ENCODE measurements at regions of chr9 and their contacts with region 1.

Region 1: DNA sequence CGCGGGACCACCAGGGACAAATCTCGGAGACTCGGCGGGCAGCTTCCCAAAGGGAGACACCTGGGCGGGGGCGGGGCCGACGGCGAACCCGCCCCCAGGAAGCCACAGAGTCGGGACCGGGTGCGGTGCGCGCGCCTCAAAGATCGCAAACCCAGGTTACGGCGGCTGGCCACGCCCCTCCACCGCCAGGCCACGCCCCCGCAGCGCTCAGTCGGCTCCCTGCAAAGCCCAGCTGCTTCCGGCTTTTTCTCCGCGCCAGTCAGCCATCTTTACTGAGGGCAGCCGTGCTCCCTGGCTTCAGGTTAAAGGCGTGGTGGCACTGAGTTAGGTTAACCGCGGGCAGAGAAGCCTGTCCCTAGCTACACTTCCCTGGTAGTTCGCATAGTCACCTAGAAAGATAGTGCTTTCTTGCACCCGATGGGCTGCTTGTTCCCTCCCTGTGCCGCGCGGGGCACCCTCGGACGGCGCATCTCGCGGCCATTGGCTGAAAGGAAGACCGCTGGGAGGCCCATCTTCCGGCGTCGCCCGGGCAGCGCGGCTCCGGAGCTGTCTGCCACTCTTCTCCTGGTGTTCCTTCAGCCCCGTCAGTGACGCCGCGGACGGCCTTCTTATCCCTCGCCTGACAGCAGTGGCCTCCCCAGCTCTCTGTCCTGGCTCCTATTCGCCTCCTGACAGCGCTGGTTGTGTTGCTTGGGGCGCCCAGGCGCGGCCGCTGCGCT is at the start of gene TBC1D2:
- DNase-seq: peak; percentile 96 to 99 (median 97)
- ATAC-seq: peak; percentile 92
- H3K4me3 ChIP-seq: peak within 1 kb of the TSS; percentile 90 to 94
- H3K4me3 Mint-ChIP-seq: peak within 1 kb of the TSS; percentile 93
- H3K27ac ChIP-seq: peak within 1 kb of the TSS; percentile 82 to 88
- H3K27ac Mint-ChIP-seq: peak within 1 kb of the TSS; percentile 94
- H3K4me1 ChIP-seq: peaks cover 20% of the 10 kb centered on the region
- H3K4me1 Mint-ChIP-seq: peaks cover 33% of the 10 kb centered on the region
- H3K27me3 ChIP-seq: no peaks in the 10 kb centered on the region
- H3K27me3 Mint-ChIP-seq: no peaks in the 10 kb centered on the region
- CTCF ChIP-seq: peak; percentile 13
- total RNA-seq, gene TBC1D2: 1.9 to 2.6 TPM

Region 2: DNA sequence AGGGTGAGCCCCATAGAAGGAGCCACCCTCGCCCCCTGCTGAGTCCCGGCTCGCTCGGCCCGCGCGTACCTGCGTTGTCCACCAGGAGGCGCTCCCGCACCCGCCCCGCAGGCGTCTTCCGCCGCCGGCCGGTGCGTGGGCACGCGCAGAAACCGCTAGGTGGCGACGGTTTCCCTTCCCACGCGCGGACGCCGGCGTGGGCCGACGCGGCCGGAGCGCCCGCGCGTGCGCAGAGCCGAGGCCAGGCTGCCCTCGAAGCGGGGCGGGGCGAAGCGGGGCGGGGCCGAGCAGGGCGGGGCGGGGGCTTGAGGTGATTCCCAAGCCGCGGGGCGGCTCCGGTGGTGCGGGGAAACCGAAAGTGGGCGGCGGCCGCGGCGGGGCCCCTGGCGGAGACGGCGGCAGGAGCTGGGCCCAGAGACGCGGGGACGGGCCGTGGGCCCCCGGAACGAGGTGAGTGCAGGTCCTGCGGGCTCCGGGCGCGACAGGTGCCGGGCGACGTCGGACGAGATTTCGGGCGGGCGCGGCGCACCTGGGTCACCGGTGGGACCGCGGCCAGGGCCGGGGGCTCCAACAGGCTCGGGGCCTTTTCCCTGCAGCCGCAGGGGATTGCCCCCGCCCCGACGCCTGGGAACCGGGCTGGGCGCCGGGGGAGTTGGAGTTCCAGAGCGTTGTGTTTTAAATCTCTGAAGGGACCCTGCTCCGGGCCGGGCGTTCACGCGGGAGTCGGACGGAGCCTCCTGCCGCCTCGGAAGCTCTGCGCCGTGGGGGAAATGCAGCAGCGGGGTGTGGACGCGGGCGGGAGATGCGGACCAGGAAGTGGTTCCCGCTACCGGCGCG is 843.7 kb before region 1 on chr9 and contains the start of gene TDRD7:
- CTCF ChIA-PET with region 1: interaction called, 6 read pairs
- POLR2A ChIA-PET with region 1: no interaction called
- intact Hi-C with region 1: loop called in 1 of 2 experiments (anchors 5 kb)
- DNase-seq: peak; percentile 86 to 97 (median 92)
- ATAC-seq: peak; percentile 88
- H3K4me3 ChIP-seq: peak within 1 kb of the TSS; percentile 62 to 77
- H3K4me3 Mint-ChIP-seq: peak within 1 kb of the TSS; percentile 86
- H3K27ac ChIP-seq: peak within 1 kb of the TSS; percentile 56 to 79
- H3K27ac Mint-ChIP-seq: peak within 1 kb of the TSS; percentile 85
- H3K4me1 ChIP-seq: peaks cover 13% of the 10 kb centered on the region
- H3K4me1 Mint-ChIP-seq: peaks cover 27% of the 10 kb centered on the region
- H3K27me3 ChIP-seq: no peaks in the 10 kb centered on the region
- H3K27me3 Mint-ChIP-seq: peaks cover 14% of the 10 kb centered on the region
- CTCF ChIP-seq: peak; percentile 96
- total RNA-seq, gene TDRD7: 3.5 to 4.5 TPM

Region 3: GRCh38 chr9:97803167-97804058 is 452.3 kb before region 1 on chr9:
- CTCF ChIA-PET with region 1: no interaction called
- POLR2A ChIA-PET with region 1: no interaction called
- intact Hi-C with region 1: loop called (anchors 1 to 5 kb)
- DNase-seq: peak; percentile 47 to 86 (median 77)
- ATAC-seq: peak; percentile 97
- H3K4me3 ChIP-seq: peak overlapping the region; percentile 43 to 56
- H3K4me3 Mint-ChIP-seq: peak overlapping the region; percentile 81
- H3K27ac ChIP-seq: no peak overlapping the region
- H3K27ac Mint-ChIP-seq: peak overlapping the region; percentile 42
- H3K4me1 ChIP-seq: peaks cover 7% of the 10 kb centered on the region
- H3K4me1 Mint-ChIP-seq: peaks cover 5% of the 10 kb centered on the region
- H3K27me3 ChIP-seq: peaks cover 3 to 5% of the 10 kb centered on the region in 2 experiments
- H3K27me3 Mint-ChIP-seq: peaks cover 13% of the 10 kb centered on the region
- CTCF ChIP-seq: no peak

Region 4: DNA sequence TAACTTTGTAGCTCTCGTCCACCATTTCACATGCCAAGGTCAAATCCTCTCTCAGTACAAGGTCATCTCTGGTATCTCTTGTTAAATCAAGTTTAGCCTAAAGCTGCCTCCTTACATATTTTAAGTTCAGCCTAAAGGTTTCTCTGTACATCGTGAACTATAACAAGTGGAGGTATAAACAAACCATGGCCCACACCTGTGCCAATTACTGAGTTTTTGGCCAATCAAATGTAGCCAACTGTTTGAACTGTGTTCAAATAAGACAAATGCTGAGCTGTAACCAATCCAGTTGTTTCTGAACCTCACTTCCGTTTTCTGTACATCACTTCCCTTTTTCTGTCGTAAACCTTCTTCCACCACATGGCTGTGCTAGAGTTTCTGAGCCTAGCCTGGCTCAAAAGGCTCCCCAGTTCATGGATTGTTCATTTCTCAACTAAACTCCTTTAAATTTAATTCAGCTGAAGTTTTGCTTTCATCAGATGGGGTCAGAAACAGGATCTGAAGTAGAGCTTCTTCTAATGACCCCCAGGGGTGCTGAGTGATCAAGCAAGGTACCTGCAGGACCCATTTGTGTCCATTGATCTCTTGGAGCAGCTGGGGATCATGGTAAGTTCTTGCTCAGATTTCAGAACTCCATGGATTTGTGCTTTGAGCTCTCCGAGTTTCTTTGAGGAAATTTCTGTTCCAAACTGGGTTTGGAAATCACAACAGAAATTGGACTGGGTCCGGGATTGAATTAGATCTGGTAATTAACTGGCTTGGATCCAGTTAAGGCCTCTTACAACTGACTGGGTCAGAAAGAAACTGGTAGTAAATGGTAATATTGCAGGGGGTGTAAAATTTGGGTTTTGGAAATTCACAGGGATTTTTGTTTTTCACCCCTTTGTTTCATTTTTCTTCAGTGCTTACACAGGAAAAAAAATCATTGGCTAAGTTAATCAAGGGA is 210.2 kb before region 1 on chr9:
- CTCF ChIA-PET with region 1: interaction called, 3 read pairs
- POLR2A ChIA-PET with region 1: interaction called, 23 read pairs
- intact Hi-C with region 1: loop called in 1 of 2 experiments (anchors 1 kb)
- DNase-seq: peak in 6 of 9 experiments; percentile 14 to 88 (median 32)
- ATAC-seq: peak; percentile 97
- H3K4me3 ChIP-seq: peak overlapping the region; percentile 46 to 55
- H3K4me3 Mint-ChIP-seq: peak overlapping the region; percentile 78
- H3K27ac ChIP-seq: peak overlapping the region; percentile 47 to 77
- H3K27ac Mint-ChIP-seq: peak overlapping the region; percentile 93
- H3K4me1 ChIP-seq: peaks cover 21% of the 10 kb centered on the region
- H3K4me1 Mint-ChIP-seq: peaks cover 31% of the 10 kb centered on the region
- H3K27me3 ChIP-seq: no peaks in the 10 kb centered on the region
- H3K27me3 Mint-ChIP-seq: no peaks in the 10 kb centered on the region
- CTCF ChIP-seq: no peak

Region 5: GRCh38 chr9:98101868-98102273 is 153.9 kb before region 1 on chr9:
- CTCF ChIA-PET with region 1: interaction called, 7 read pairs
- POLR2A ChIA-PET with region 1: interaction called, 19 read pairs
- intact Hi-C with region 1: no loop called
- DNase-seq: peak; percentile 64 to 97 (median 82)
- ATAC-seq: peak; percentile 95
- H3K4me3 ChIP-seq: peak overlapping the region; percentile 3 to 8
- H3K4me3 Mint-ChIP-seq: peak overlapping the region; percentile 68
- H3K27ac ChIP-seq: peak overlapping the region; percentile 33 to 76
- H3K27ac Mint-ChIP-seq: peak overlapping the region; percentile 97
- H3K4me1 ChIP-seq: peaks cover 87% of the 10 kb centered on the region
- H3K4me1 Mint-ChIP-seq: peaks cover 82% of the 10 kb centered on the region
- H3K27me3 ChIP-seq: no peaks in the 10 kb centered on the region
- H3K27me3 Mint-ChIP-seq: no peaks in the 10 kb centered on the region
- CTCF ChIP-seq: no peak

Region 6: GRCh38 chr9:98202252-98202651 is 53.5 kb before region 1 on chr9:
- CTCF ChIA-PET with region 1: interaction called, 3 read pairs
- POLR2A ChIA-PET with region 1: no interaction called
- intact Hi-C with region 1: loop called in 1 of 2 experiments (anchors 2 kb)
- DNase-seq: no peak
- ATAC-seq: no peak
- H3K4me3 ChIP-seq: no peak overlapping the region
- H3K4me3 Mint-ChIP-seq: no peak overlapping the region
- H3K27ac ChIP-seq: no peak overlapping the region
- H3K27ac Mint-ChIP-seq: no peak overlapping the region
- H3K4me1 ChIP-seq: no peaks in the 10 kb centered on the region
- H3K4me1 Mint-ChIP-seq: peaks cover 5% of the 10 kb centered on the region
- H3K27me3 ChIP-seq: no peaks in the 10 kb centered on the region
- H3K27me3 Mint-ChIP-seq: no peaks in the 10 kb centered on the region
- CTCF ChIP-seq: no peak

Region 7: DNA sequence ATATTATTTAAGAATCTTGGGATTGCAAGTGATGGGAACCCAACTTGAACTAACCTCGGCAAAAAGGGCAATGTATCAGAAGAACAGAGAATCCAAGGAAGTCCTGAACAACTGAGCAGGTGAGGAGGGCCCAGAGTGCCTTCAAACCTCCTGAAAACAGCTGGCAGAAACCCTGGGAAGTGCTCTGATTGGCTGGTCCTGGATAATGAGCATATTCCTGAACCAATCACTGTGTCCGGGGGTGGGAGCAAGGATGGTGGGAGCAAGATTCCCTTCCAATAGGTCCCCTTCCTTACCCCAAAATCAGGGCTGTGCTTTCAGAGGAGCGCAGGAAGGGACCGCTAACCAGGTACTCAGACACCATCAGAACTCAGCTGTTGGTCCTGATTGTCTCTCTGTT is 31.6 kb after region 1 on chr9:
- CTCF ChIA-PET with region 1: no interaction called
- POLR2A ChIA-PET with region 1: no interaction called
- intact Hi-C with region 1: no loop called
- DNase-seq: no peak
- ATAC-seq: no peak
- H3K4me3 ChIP-seq: no peak overlapping the region
- H3K4me3 Mint-ChIP-seq: no peak overlapping the region
- H3K27ac ChIP-seq: no peak overlapping the region
- H3K27ac Mint-ChIP-seq: no peak overlapping the region
- H3K4me1 ChIP-seq: no peaks in the 10 kb centered on the region
- H3K4me1 Mint-ChIP-seq: no peaks in the 10 kb centered on the region
- H3K27me3 ChIP-seq: no peaks in the 10 kb centered on the region
- H3K27me3 Mint-ChIP-seq: peaks cover 10% of the 10 kb centered on the region
- CTCF ChIP-seq: no peak

Measured in CD8-positive, alpha-beta T cell (primary cell).